Posterior vena cava (tissue), 2 donors: ENCODE measurements at regions of chr9 and their contacts with region 1.

Region 1: DNA sequence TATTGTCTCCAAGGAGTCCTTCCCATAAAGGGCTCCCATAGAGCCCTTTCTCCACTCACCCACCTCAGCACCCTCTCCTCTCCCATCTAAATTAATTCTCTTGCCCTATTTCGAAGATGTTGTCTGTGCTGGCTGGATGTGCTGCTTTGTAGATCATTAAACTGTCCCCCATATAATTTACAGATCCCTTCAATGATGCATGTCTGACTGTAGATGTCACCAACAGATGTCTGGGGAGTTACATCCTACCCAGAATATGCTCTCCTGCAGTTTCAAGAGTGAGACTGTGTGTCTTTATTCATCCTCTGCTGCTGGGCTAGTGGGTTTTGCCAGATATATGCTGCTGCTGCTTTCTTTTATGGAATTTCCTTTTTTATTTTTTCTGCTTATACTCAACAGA is 351.2 kb downstream of the MLLT3 start:
- DNase-seq: no peak

Region 2: DNA sequence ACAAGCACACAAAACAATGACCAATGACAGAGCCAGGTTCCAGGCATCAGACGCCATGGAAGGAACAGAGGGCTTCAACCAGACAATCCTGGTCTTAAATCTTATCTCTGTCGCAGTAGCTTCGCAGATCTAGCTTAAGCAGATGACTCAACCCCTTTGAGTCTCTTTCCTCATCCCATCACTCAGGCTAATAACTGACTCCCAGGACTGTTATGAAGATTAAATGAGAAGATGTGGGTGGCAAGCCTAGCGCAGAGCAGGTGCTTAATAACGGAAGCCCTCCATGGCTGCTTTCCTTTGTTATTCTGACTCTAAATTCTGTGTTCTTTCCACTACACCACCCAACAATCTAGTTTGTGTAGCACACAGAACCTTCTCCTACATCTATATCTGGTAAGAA is 593.2 kb before region 1 on chr9:
- intact Hi-C with region 1: no loop called
- DNase-seq: no peak

Region 3: GRCh38 chr9:20095430-20096092 is 175.5 kb before region 1 on chr9:
- intact Hi-C with region 1: loop called in 1 of 2 experiments (anchors 5 kb)
- DNase-seq: no peak

Region 4: GRCh38 chr9:20217596-20217995 is 53.5 kb before region 1 on chr9:
- intact Hi-C with region 1: loop called in 1 of 2 experiments (anchors 2 kb)
- DNase-seq: no peak